ENCODE measurements at regions of chr11 and their contacts with region 1.

Region 1: GRCh38 chr11:88543902-88544655 is 206.5 kb upstream of the CTSC start:
- DNase-seq: peak; percentile 79
- H3K4me3 ChIP-seq: no peak overlapping the region
- H3K27ac ChIP-seq: no peak overlapping the region
- H3K4me1 ChIP-seq: no peaks in the 10 kb centered on the region
- CTCF ChIP-seq: peak; percentile 93

Region 2: GRCh38 chr11:86938900-86939880 is 1604.9 kb before region 1 on chr11:
- CTCF ChIA-PET with region 1: no interaction called
- POLR2A ChIA-PET with region 1: no interaction called
- intact Hi-C with region 1: loop called (anchors 2 kb)
- DNase-seq: peak; percentile 62
- H3K4me3 ChIP-seq: no peak overlapping the region
- H3K27ac ChIP-seq: no peak overlapping the region
- H3K4me1 ChIP-seq: no peaks in the 10 kb centered on the region
- CTCF ChIP-seq: peak; percentile 80

Region 3: GRCh38 chr11:87463486-87464102 is 1080.5 kb before region 1 on chr11:
- CTCF ChIA-PET with region 1: no interaction called
- POLR2A ChIA-PET with region 1: no interaction called
- intact Hi-C with region 1: loop called (anchors 1 kb)
- DNase-seq: peak; percentile 71
- H3K4me3 ChIP-seq: no peak overlapping the region
- H3K27ac ChIP-seq: no peak overlapping the region
- H3K4me1 ChIP-seq: peaks cover 43% of the 10 kb centered on the region
- CTCF ChIP-seq: peak; percentile 85

Region 4: GRCh38 chr11:87878373-87878779 is 665.7 kb before region 1 on chr11:
- CTCF ChIA-PET with region 1: no interaction called
- POLR2A ChIA-PET with region 1: no interaction called
- intact Hi-C with region 1: loop called (anchors 2 kb)
- DNase-seq: peak; percentile 53
- H3K4me3 ChIP-seq: no peak overlapping the region
- H3K27ac ChIP-seq: peak overlapping the region; percentile 21
- H3K4me1 ChIP-seq: peaks cover 13% of the 10 kb centered on the region
- CTCF ChIP-seq: peak; percentile 85

Region 5: GRCh38 chr11:88103337-88104206 is 440.5 kb before region 1 on chr11:
- CTCF ChIA-PET with region 1: no interaction called
- POLR2A ChIA-PET with region 1: no interaction called
- intact Hi-C with region 1: loop called (anchors 1 kb)
- DNase-seq: peak; percentile 51
- H3K4me3 ChIP-seq: no peak overlapping the region
- H3K27ac ChIP-seq: no peak overlapping the region
- H3K4me1 ChIP-seq: no peaks in the 10 kb centered on the region
- CTCF ChIP-seq: peak; percentile 81

Region 6: DNA sequence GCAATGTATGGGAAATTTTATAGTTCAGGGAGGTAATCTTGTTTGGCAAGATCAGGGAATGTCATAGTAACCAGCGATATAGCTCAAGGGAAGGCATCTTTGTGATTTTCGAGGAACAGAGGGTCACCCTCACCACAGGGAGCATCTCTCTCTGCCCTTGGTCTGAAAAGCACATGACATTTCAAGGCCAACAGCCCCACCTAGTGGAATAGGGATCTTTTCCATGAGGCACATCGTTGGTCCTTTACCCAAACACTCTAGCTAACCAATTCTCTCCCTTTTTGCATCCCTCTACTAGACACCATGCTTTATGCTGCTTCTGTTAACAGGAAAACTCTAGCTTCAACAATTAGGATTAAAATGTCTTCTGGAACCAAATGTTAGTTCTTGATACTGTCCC is 342.7 kb after region 1 on chr11:
- CTCF ChIA-PET with region 1: no interaction called
- POLR2A ChIA-PET with region 1: no interaction called
- intact Hi-C with region 1: loop called (anchors 2 kb)
- DNase-seq: peak; percentile 76
- H3K4me3 ChIP-seq: no peak overlapping the region
- H3K27ac ChIP-seq: no peak overlapping the region
- H3K4me1 ChIP-seq: no peaks in the 10 kb centered on the region
- CTCF ChIP-seq: peak; percentile 79